Activated T-helper 1 cell treated with anti-CD3 and anti-CD28 coated beads, Interleukin-12 subunit alpha, Interleukin-12 subunit beta, Interleukin-2, Interleukin-4 antibody, amounts not matched to agents 30 ng/mL and 10 ng/mL and 1 ng/mL, durations not matched to agents 14 hours and 24 hours and 36 hours (primary cell): ENCODE measurements at regions of chr2 and their contacts with region 1.

Region 1: DNA sequence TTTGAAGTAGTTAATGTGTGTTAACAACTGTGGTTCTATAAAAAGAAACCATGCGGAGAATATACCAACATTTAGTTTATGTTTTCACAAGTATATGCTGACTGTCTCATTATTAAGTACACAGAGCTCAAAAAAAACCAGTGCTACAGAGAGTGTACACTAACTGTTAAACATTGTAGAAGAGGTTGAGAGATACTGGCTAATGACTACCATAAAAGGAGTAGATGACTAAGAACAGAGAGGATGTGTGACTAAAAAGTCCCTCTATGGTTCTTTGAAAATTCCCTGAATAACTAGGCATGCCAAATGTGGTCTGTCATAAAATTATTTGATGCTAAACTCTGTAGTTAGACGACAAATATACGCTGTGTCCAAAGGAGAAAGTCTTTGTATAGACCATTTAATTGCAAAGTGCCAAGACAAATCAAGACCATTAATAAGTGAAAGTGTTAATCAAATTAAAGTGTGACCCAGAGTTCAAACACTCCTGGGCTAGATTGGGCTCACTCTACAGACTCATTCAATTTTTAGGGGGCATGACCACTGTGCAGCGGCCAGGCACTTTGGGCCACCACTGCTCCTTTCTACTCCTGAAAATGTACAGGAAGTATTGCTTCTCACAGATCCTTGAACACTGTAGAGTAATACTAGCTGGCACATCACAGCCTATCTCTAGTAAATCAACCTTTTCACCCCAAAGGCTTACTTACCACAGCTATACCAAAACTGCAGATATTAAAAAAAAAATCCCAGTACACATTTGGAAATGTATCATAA is 45.1 kb upstream of the SERTAD2 start:
- DNase-seq: no peak
- H3K4me3 Mint-ChIP-seq: peak overlapping the region; percentile 53
- H3K27ac Mint-ChIP-seq: peak overlapping the region; percentile 90
- H3K4me1 Mint-ChIP-seq: peaks cover 60% of the 10 kb centered on the region
- H3K27me3 Mint-ChIP-seq: no peaks in the 10 kb centered on the region

Region 2: GRCh38 chr2:64404002-64404731 is 294.7 kb before region 1 on chr2:
- intact Hi-C with region 1: no loop called
- DNase-seq: no peak
- H3K4me3 Mint-ChIP-seq: no peak overlapping the region
- H3K27ac Mint-ChIP-seq: no peak overlapping the region
- H3K4me1 Mint-ChIP-seq: no peaks in the 10 kb centered on the region
- H3K27me3 Mint-ChIP-seq: peaks cover 5% of the 10 kb centered on the region

Region 3: DNA sequence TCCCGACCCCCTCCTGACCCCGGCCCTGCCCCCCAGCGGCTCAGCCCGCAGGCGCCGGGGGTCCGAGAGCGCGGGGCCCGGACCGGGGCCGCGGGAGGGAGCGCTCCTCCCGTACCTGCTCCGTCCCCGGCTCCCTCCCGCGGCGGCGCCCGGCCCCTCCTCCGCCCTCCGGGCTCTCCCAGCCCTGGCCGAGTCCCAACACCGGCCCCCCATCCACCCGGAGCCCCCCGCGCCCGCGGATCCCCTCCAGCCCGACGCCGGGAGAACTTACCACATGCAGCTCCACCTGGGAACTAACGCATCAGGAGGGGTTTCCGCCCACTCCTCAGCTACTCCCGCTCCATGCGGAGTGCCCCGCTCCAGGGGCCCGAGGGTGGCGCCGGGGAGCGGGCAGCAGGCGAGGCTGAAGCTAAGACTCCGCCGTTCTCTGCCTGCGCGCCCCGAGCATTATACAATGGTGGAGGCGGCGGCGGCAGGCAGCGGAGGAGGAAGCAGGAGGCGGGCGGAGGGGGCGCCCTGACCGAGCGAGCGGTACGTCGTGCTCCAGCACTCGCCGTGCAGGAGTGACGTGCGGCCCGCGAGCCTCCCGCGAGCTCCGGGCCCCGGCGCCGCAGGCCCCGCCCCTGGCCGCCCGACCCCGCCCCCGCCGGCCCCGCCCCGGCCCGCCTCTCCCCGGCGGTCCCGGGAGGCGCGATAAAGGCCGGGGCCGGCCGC is 45.4 kb before region 1 on chr2 and contains the start of gene SERTAD2:
- intact Hi-C with region 1: loop called (anchors 1 kb)
- DNase-seq: peak; percentile 83
- H3K4me3 Mint-ChIP-seq: peak within 1 kb of the TSS; percentile 90
- H3K27ac Mint-ChIP-seq: peak within 1 kb of the TSS; percentile 90
- H3K4me1 Mint-ChIP-seq: peaks cover 71% of the 10 kb centered on the region
- H3K27me3 Mint-ChIP-seq: no peaks in the 10 kb centered on the region
- total RNA-seq, gene SERTAD2: 27.3 and 28.5 TPM in 2 replicates

Region 4: GRCh38 chr2:64686283-64686956 is 12.4 kb before region 1 on chr2:
- intact Hi-C with region 1: loop called (anchors 1 kb)
- DNase-seq: no peak
- H3K4me3 Mint-ChIP-seq: no peak overlapping the region
- H3K27ac Mint-ChIP-seq: peak overlapping the region; percentile 82
- H3K4me1 Mint-ChIP-seq: peaks cover 26% of the 10 kb centered on the region
- H3K27me3 Mint-ChIP-seq: no peaks in the 10 kb centered on the region

Region 5: DNA sequence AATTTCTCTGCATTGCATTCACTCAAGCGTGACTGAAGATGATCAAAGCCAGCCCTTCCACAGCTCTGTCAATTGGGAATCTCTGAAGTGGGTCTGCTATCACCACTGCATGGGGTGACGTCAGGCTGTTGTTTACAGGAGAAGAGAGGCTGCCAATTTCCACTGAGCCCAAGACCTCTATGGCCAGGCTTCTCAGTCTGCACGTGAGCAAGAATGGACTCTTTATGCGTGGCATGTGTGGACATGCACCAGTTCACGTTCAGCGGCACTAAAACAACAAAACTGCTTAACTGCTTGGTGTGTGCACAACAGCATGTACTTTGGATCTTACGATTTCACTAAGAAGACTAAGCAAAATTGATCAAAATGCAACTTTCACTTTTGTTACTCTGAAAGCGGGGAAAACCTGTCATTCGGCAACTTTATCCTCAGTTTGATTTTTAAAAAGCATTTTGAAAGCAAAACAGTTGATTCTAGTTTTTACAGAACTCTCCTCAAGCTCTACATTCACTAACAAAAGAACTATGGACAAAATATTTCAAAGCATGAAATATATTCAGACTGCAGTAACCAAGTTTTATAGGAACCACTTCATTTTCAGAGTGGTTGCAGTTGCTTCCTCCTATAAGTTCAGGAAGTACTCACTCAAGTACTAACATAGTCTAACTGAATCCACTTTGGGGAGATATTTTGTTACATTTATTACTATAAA is 31.9 kb after region 1 on chr2:
- intact Hi-C with region 1: loop called (anchors 1 kb)
- DNase-seq: peak; percentile 35
- H3K4me3 Mint-ChIP-seq: peak overlapping the region; percentile 85
- H3K27ac Mint-ChIP-seq: peak overlapping the region; percentile 89
- H3K4me1 Mint-ChIP-seq: peaks cover 77% of the 10 kb centered on the region
- H3K27me3 Mint-ChIP-seq: no peaks in the 10 kb centered on the region

Region 6: GRCh38 chr2:64767670-64768468 is 69.0 kb after region 1 on chr2:
- intact Hi-C with region 1: loop called (anchors 1 kb)
- DNase-seq: peak; percentile 69
- H3K4me3 Mint-ChIP-seq: peak overlapping the region; percentile 91
- H3K27ac Mint-ChIP-seq: peak overlapping the region; percentile 95
- H3K4me1 Mint-ChIP-seq: peaks cover 47% of the 10 kb centered on the region
- H3K27me3 Mint-ChIP-seq: no peaks in the 10 kb centered on the region

Region 7: DNA sequence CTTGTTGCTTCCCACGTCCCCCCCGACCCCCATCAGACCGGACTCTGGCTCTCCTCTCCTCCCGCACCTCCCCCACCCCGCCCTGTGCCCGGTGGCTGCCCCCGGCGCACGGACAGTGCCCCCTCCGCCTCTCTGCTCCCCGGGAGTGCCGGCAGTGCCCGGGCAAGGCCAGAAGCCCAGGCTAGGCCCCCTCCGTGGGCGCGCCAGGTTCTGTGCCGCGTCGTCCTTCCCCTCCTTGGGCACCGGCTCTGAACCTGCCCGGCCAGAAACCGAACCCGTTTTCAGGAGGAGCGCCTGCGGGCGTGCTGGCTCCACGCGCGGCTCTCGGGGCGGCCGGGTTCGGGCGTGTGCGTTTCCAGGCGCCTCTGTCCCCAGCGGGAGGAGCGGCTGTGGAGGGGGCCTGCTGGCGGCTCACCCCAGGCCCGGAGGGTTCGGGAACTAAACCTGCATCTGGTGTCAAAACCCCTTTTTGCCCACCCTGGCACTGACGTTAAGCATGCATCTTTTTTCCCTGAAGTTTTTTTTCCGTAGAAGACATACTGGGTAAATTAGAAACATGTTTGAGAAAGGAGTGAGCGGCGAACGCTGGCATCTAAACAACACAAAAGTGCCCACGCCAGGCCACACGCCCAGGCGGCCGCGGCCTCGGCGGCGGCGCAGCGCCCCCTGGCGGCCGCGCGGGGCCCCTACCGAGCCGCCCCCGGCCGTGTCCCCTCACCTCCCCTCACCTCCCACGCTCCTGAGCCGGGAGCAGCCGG is 166.4 kb after region 1 on chr2:
- intact Hi-C with region 1: loop called (anchors 1 kb)
- DNase-seq: peak; percentile 61
- H3K4me3 Mint-ChIP-seq: peak overlapping the region; percentile 78
- H3K27ac Mint-ChIP-seq: peak overlapping the region; percentile 60
- H3K4me1 Mint-ChIP-seq: peaks cover 6% of the 10 kb centered on the region
- H3K27me3 Mint-ChIP-seq: peaks cover 13% of the 10 kb centered on the region

Region 8: GRCh38 chr2:64963719-64964118 is 264.9 kb after region 1 on chr2:
- intact Hi-C with region 1: no loop called
- DNase-seq: no peak
- H3K4me3 Mint-ChIP-seq: no peak overlapping the region
- H3K27ac Mint-ChIP-seq: no peak overlapping the region
- H3K4me1 Mint-ChIP-seq: no peaks in the 10 kb centered on the region
- H3K27me3 Mint-ChIP-seq: peaks cover 4% of the 10 kb centered on the region